Naive thymus-derived CD4-positive, alpha-beta T cell (primary cell): ENCODE measurements at regions of chr2 and their contacts with region 1.

Region 1: DNA sequence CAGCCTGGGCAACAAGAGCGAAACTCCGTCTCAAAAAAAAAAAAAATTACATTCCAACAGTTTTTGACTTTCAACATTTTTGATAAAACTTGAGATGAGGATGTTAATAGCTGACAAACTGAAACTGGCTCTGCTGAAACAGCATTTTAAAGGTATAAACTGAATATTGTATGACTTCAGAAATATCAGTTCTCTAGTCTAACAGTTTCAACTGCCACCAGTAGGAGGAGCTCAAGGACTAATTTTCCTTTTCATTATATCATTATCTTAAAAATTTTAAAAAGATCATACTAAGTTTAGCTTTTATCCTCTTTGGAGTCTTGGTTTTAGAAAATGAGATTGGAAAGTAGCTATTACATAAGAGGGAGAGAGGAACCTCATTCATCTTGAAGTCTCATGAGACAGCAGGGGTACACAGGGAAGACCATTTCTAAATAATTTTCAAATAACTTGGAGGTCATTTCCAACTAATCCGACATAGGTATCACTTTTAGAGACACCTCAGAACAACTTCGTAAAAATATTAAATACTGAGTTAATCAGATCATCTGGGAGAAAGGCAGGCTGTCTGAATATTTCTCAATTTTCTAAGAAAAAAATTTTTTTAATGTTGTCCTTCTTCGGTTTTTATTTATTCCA is 37.6 kb upstream of the MCM6 start:
- DNase-seq: peak in 7 of 9 donors; percentile 36 to 67 (median 60)
- ATAC-seq: peak; percentile 63
- H3K4me3 ChIP-seq: no peak overlapping the region
- H3K4me3 Mint-ChIP-seq: no peak overlapping the region
- H3K27ac ChIP-seq: no peak overlapping the region
- H3K27ac Mint-ChIP-seq: peak overlapping the region in 6 of 9 donors; percentile 34 to 82 (median 55)
- H3K4me1 ChIP-seq: no peaks in the 10 kb centered on the region
- H3K4me1 Mint-ChIP-seq: peaks cover 0 to 12% (median 3%) of the 10 kb centered on the region in 7 donors
- H3K27me3 ChIP-seq: no peaks in the 10 kb centered on the region
- H3K27me3 Mint-ChIP-seq: no peaks in the 10 kb centered on the region

Region 2: DNA sequence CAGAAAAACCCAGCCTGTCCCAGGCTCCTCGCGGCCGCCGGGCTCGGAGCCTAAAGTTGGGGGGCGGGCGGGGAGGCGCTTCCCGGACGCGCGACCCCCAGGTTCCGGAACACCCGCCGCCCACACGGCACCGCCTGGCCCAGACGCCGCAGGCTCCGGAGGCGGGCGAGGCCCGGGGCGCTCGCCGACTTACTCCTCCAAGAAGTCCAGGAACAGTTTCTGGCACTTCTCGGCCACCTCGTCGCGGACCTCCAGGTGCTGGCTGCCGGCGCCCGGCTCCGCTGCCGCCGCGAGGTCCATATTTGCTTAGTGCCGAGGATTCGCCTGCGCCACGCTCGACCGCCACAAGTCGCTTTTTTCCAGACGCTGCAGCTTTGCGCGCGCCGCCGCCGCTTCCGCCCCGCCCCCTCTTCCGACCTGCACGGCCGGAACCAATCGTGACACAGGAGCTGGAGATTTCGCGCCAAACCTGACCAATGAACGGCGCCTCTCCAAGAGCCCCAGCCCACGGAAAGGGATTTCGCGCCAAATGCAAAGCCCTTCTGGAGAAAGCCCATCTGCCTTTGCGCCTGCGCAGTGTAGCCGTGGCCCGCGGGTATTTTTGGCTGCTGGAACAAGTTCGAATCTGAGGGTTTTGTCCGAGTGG is 37.7 kb before region 1 on chr2 and contains the start of gene MCM6:
- CTCF ChIA-PET with region 1: no interaction called
- POLR2A ChIA-PET with region 1: no interaction called
- intact Hi-C with region 1: loop called in 1 of 2 experiments (anchors 5 kb)
- DNase-seq: peak; percentile 91 to 99 (median 97)
- ATAC-seq: peak; percentile 96
- H3K4me3 ChIP-seq: peak within 1 kb of the TSS; percentile 83
- H3K4me3 Mint-ChIP-seq: peak within 1 kb of the TSS; percentile 85 to 97 (median 93)
- H3K27ac ChIP-seq: peak within 1 kb of the TSS; percentile 84
- H3K27ac Mint-ChIP-seq: peak within 1 kb of the TSS; percentile 84 to 97 (median 95)
- H3K4me1 ChIP-seq: peaks cover 12 to 18% of the 10 kb centered on the region in 2 donors
- H3K4me1 Mint-ChIP-seq: peaks cover 23 to 44% (median 41%) of the 10 kb centered on the region in 7 donors
- H3K27me3 ChIP-seq: no peaks in the 10 kb centered on the region
- H3K27me3 Mint-ChIP-seq: peaks cover 0 to 5% (median 0%) of the 10 kb centered on the region in 5 donors
- total RNA-seq, gene MCM6: 12.1 to 105 (median 21.6) TPM

Region 3: DNA sequence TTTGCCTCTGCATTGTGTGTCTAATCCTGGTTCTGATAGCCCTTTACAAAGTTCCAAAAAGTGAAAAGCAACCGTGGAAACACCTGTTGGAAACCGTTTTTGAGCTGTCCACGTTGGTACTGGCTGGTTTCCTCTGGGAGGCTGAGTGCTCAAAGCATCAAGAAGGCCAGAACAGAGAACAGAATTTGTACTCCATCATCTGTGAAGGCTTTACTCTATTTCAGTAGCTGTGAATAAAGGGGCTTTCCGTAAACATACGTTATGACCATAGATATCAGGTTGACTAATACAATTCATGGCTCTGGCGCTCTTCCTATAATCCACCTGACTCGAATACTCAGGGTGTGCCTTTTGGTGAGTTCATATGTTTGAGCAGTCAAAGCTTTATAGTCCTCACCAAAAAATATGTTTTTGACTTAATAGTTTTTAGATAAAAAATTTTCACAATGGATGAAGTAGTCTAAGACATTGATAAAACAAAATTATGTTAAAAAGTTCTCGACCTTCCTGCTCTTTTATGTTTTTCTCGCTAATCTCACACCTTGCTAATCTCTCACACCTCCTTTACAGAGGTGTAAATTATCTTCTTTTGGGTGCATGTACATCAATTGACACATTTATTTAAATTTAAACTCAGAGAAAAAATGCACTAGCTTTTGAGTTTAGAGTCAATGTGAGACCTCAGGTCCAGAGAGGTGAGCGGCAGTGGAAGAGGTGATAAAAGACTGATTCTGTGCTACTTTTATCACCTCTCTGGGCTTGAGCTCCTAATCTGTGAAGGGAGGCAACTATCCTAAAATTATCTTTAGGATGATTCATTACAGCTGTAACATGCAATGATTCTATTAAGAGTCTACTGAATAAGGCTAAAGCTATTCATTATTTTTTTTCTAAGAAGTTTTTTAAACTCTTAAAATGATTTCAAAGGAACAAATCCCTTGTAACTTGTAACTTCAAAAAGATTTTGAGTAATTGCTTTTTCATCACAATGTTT is 138.8 kb after region 1 on chr2:
- CTCF ChIA-PET with region 1: interaction called, 3 read pairs
- POLR2A ChIA-PET with region 1: no interaction called
- intact Hi-C with region 1: loop called (anchors 1 to 5 kb)
- DNase-seq: no peak
- ATAC-seq: peak; percentile 15
- H3K4me3 ChIP-seq: peak overlapping the region; percentile 12
- H3K4me3 Mint-ChIP-seq: peak overlapping the region; percentile 37 to 85 (median 70)
- H3K27ac ChIP-seq: peak overlapping the region; percentile 50
- H3K27ac Mint-ChIP-seq: peak overlapping the region; percentile 62 to 96 (median 87)
- H3K4me1 ChIP-seq: peaks cover 86 to 92% of the 10 kb centered on the region in 2 donors
- H3K4me1 Mint-ChIP-seq: peaks cover 60 to 93% (median 90%) of the 10 kb centered on the region in 7 donors
- H3K27me3 ChIP-seq: no peaks in the 10 kb centered on the region
- H3K27me3 Mint-ChIP-seq: no peaks in the 10 kb centered on the region

Region 4: GRCh38 chr2:136255648-136256463 is 342.0 kb after region 1 on chr2:
- CTCF ChIA-PET with region 1: interaction called, 5 read pairs
- POLR2A ChIA-PET with region 1: no interaction called
- intact Hi-C with region 1: loop called in 1 of 2 experiments (anchors 2 kb)
- DNase-seq: peak in 7 of 9 donors; percentile 16 to 58 (median 35)
- ATAC-seq: peak; percentile 68
- H3K4me3 ChIP-seq: no peak overlapping the region
- H3K4me3 Mint-ChIP-seq: no peak overlapping the region
- H3K27ac ChIP-seq: no peak overlapping the region
- H3K27ac Mint-ChIP-seq: peak overlapping the region in 8 of 9 donors; percentile 2 to 87 (median 40)
- H3K4me1 ChIP-seq: no peaks in the 10 kb centered on the region
- H3K4me1 Mint-ChIP-seq: peaks cover 7 to 42% (median 27%) of the 10 kb centered on the region in 7 donors
- H3K27me3 ChIP-seq: no peaks in the 10 kb centered on the region
- H3K27me3 Mint-ChIP-seq: no peaks in the 10 kb centered on the region

Region 5: GRCh38 chr2:136378712-136379595 is 465.1 kb after region 1 on chr2:
- CTCF ChIA-PET with region 1: interaction called, 270 read pairs
- POLR2A ChIA-PET with region 1: interaction called, 17 read pairs
- intact Hi-C with region 1: loop called (anchors 1 kb)
- DNase-seq: peak; percentile 44 to 81 (median 75)
- ATAC-seq: peak; percentile 69
- H3K4me3 ChIP-seq: no peak overlapping the region
- H3K4me3 Mint-ChIP-seq: peak overlapping the region in 1 of 10 donors; percentile 12
- H3K27ac ChIP-seq: no peak overlapping the region
- H3K27ac Mint-ChIP-seq: peak overlapping the region in 6 of 9 donors; percentile 48 to 93 (median 82)
- H3K4me1 ChIP-seq: peaks cover 20 to 34% of the 10 kb centered on the region in 2 donors
- H3K4me1 Mint-ChIP-seq: peaks cover 32 to 84% (median 65%) of the 10 kb centered on the region in 7 donors
- H3K27me3 ChIP-seq: no peaks in the 10 kb centered on the region
- H3K27me3 Mint-ChIP-seq: no peaks in the 10 kb centered on the region

Region 6: DNA sequence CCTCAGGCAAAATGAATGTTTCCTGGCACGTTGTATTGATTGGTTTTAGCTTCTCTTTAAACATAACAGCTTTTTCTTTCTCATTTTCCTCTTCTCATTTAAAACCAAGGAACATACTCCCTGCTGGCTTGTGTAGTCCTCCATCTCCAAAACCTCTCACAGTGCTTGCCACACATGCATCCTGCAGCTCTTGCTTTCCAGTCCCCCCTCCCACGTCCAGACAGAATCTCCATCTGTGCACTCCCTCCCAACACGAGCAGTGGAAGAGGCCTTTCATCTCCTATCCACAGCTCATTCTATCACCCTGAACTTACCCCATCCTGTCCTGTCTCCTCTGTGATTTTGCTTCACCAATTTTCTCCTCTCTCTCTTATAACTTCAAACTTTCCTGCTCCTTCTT is 751.9 kb after region 1 on chr2:
- CTCF ChIA-PET with region 1: no interaction called
- POLR2A ChIA-PET with region 1: no interaction called
- intact Hi-C with region 1: loop called in 1 of 2 experiments (anchors 2 kb)
- DNase-seq: no peak
- ATAC-seq: no peak
- H3K4me3 ChIP-seq: no peak overlapping the region
- H3K4me3 Mint-ChIP-seq: no peak overlapping the region
- H3K27ac ChIP-seq: no peak overlapping the region
- H3K27ac Mint-ChIP-seq: no peak overlapping the region
- H3K4me1 ChIP-seq: no peaks in the 10 kb centered on the region
- H3K4me1 Mint-ChIP-seq: no peaks in the 10 kb centered on the region
- H3K27me3 ChIP-seq: no peaks in the 10 kb centered on the region
- H3K27me3 Mint-ChIP-seq: peaks cover 0 to 10% (median 4%) of the 10 kb centered on the region in 5 donors